ENCODE measurements at regions of chr13 and their contacts with region 1.

Region 1: DNA sequence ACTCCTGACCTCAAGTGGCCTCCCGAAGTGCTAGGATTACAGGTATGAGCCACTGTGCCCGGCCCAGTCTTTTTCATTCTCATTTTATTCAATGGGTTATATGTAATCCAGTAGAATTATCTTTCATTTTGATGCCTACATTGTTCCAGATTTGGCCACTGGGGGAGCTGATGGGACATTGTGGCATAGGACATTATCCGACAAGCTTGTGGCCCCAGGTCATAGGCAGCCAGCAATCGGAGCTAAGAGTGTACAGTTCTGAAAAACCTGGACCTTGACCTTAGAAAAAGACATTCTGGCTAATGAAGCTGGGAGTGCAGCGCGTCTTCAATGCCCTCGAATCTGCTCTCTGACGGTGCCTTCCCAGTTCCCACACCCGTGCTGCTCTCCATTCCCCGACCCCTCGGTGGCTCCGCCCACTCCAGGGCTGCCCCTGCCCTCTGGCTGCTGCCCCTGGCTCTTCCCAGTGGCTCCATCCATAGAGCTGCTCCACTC is 108.7 kb downstream of the TEX29 start:
- DNase-seq: no peak
- H3K4me3 ChIP-seq: no peak overlapping the region
- H3K27me3 ChIP-seq: no peaks in the 10 kb centered on the region
- CTCF ChIP-seq: peak; percentile 58

Region 2: DNA sequence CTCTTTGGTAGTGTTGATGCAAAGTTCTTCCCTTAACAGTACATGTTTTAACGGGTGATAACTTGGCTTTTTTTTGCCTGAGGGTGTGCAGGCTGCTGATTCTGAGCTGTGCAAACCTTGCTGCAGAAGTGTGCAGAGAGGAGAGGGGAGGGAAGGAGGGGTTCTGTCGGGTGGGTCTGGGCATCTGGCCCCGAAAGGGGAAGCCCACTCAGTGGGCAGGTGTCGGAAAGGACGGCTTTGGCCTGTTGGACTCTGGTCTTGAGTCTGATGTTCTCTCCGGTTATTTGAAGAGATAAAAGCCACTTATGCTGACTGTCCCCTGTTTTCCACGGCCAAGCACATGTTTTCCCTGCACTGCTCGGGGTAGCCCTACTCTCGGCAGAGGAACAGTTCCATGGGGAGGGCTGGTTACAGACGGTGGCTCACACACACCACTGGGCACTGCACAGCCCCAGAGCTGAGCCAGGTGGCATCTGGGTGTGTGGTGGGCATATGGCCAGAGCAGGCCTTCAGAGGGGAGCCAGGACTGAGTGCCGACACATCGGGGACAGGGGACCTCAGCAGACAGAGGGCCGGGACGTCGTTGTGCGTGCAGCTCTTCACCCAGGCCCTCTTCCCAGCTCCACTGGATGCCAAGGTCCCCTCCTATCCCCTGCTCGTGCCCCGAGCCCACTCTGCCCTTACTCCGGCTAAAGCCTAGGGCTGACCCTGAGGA is 15.5 kb before region 1 on chr13:
- CTCF ChIA-PET with region 1: interaction called, 12 read pairs
- POLR2A ChIA-PET with region 1: no interaction called
- DNase-seq: no peak
- H3K4me3 ChIP-seq: no peak overlapping the region
- H3K27me3 ChIP-seq: peaks cover 6% of the 10 kb centered on the region
- CTCF ChIP-seq: no peak